ENCODE measurements at regions of chr4 and their contacts with region 1.

Region 1: DNA sequence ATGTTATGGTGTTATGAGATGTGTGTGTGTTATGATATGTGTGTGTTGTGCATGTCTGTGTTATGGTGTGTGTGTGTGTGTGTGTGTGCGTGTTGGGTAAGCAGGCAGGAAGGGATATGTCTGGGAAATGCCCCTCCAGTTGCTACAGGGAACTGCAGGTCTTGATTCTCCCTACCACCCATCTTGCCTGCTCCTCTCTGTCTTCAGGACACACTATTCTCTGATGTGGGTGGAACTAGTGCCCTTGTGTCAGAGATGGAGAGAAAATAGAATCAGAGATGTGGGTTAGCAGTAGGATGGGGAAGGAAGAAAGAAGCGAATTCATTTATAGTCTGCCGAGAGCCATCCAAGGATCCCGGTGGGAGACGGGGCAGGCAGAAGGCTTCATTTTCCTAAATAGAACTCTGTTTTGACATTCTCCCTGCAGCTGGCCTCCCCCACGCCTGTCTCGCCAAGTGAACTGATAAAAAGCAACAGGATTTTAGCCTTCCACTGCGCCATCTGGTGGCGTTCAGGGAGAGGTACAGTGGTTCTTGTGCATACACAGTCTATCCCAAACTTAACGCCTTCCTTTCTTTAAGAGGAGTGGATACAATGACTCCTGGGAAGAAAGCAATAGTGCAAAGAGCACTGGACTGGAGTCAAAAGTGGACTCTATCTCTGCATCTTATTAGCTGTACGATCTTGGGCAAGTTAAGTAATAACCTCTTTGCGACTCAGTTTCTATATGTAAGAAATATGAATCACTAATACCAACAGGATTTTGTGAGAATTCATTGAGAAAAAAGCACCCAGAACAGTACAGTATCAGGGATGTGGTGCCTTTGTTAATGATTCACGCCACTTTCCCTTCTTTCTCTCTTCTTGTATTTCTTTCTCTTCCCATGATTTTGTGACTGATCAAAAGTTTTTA is 14.1 kb upstream of the MGST2 start:
- DNase-seq: peak; percentile 66 to 75
- H3K4me3 ChIP-seq: no peak overlapping the region
- H3K4me3 Mint-ChIP-seq: no peak overlapping the region
- H3K27ac Mint-ChIP-seq: no peak overlapping the region
- H3K4me1 ChIP-seq: peaks cover 2% of the 10 kb centered on the region; the same call in 1 of the 2 replicates
- H3K4me1 Mint-ChIP-seq: peaks cover 12% of the 10 kb centered on the region
- H3K27me3 ChIP-seq: no peaks in the 10 kb centered on the region
- H3K27me3 Mint-ChIP-seq: no peaks in the 10 kb centered on the region
- CTCF ChIP-seq: peak; percentile 86 to 90

Region 2: GRCh38 chr4:139603576-139604387 is 47.8 kb before region 1 on chr4:
- CTCF ChIA-PET with region 1: interaction called, 7 read pairs
- POLR2A ChIA-PET with region 1: no interaction called
- intact Hi-C with region 1: loop called (anchors 1 kb)
- DNase-seq: peak; percentile 67 to 77
- H3K4me3 ChIP-seq: no peak overlapping the region
- H3K4me3 Mint-ChIP-seq: no peak overlapping the region
- H3K27ac Mint-ChIP-seq: no peak overlapping the region
- H3K4me1 ChIP-seq: peaks cover 34% of the 10 kb centered on the region; the same call in 1 of the 2 replicates
- H3K4me1 Mint-ChIP-seq: peaks cover 37% of the 10 kb centered on the region
- H3K27me3 ChIP-seq: no peaks in the 10 kb centered on the region
- H3K27me3 Mint-ChIP-seq: no peaks in the 10 kb centered on the region
- CTCF ChIP-seq: peak; percentile 64 to 71

Region 3: GRCh38 chr4:139619644-139620043 is 31.9 kb before region 1 on chr4:
- CTCF ChIA-PET with region 1: interaction called, 7 read pairs
- POLR2A ChIA-PET with region 1: no interaction called
- intact Hi-C with region 1: loop called (anchors 1 kb)
- DNase-seq: no peak
- H3K4me3 ChIP-seq: no peak overlapping the region
- H3K4me3 Mint-ChIP-seq: no peak overlapping the region
- H3K27ac Mint-ChIP-seq: no peak overlapping the region
- H3K4me1 ChIP-seq: peaks cover 14% of the 10 kb centered on the region
- H3K4me1 Mint-ChIP-seq: peaks cover 22% of the 10 kb centered on the region
- H3K27me3 ChIP-seq: no peaks in the 10 kb centered on the region
- H3K27me3 Mint-ChIP-seq: no peaks in the 10 kb centered on the region
- CTCF ChIP-seq: peak; percentile 46 to 49

Region 4: GRCh38 chr4:140463182-140463581 is 811.6 kb after region 1 on chr4:
- CTCF ChIA-PET with region 1: no interaction called
- POLR2A ChIA-PET with region 1: no interaction called
- intact Hi-C with region 1: no loop called
- DNase-seq: no peak
- H3K4me3 ChIP-seq: no peak overlapping the region
- H3K4me3 Mint-ChIP-seq: no peak overlapping the region
- H3K27ac Mint-ChIP-seq: no peak overlapping the region
- H3K4me1 ChIP-seq: no peaks in the 10 kb centered on the region
- H3K4me1 Mint-ChIP-seq: no peaks in the 10 kb centered on the region
- H3K27me3 ChIP-seq: no peaks in the 10 kb centered on the region
- H3K27me3 Mint-ChIP-seq: no peaks in the 10 kb centered on the region
- CTCF ChIP-seq: no peak

Measured in Caco-2 (cell line).